Vagina (tissue), 2 donors: ENCODE measurements at regions of chr3 and their contacts with region 1.

Region 1: DNA sequence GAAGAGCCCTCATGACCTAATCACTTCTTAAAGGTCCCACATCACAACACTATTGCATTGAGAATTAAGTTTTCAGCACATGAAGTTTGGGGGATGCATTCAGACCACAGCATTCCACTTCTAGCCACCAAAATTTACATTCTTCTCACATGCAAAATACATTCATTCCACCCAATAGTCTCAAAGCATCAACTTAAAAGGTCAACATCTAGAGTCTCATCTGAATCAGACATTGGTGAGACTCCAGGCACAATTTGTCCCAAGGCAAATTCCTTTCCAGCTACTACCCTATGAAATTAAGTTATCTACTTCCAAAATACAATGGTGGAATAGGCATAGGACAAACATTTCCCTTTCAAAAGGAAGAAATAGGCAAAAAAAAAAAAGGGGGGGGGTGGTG is 64.9 kb downstream of the PLSCR2 start:
- DNase-seq: no peak
- H3K4me3 ChIP-seq: no peak overlapping the region
- H3K27ac ChIP-seq: no peak overlapping the region
- H3K4me1 ChIP-seq: no peaks in the 10 kb centered on the region
- H3K27me3 ChIP-seq: no peaks in the 10 kb centered on the region
- CTCF ChIP-seq: no peak
- POLR2A ChIP-seq: no peak

Region 2: DNA sequence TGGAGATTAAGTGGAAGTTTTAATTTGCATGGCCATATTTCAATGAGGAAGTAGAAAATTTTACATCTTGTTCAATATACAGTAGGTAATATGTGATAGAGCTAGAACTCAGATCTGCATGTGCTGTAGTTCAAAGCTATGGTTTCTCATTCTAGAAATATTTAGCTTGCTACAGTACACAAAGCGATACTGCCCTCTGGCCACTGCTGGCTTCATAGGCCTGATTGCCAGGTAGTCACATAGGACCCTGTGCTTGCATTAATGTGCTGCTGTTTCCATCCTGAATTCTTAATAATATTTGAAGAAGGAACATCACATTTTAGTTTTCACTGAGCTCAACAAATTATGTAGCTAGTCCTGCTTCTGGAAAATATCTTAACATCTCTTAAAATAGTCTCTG is 22.1 kb before region 1 on chr3:
- intact Hi-C with region 1: no loop called
- DNase-seq: no peak
- H3K4me3 ChIP-seq: no peak overlapping the region
- H3K27ac ChIP-seq: no peak overlapping the region
- H3K4me1 ChIP-seq: no peaks in the 10 kb centered on the region
- H3K27me3 ChIP-seq: no peaks in the 10 kb centered on the region
- CTCF ChIP-seq: no peak
- POLR2A ChIP-seq: no peak

Region 3: GRCh38 chr3:146454796-146455195 is 50.4 kb after region 1 on chr3:
- intact Hi-C with region 1: loop called (anchors 10 kb)
- DNase-seq: no peak
- H3K4me3 ChIP-seq: no peak overlapping the region
- H3K27ac ChIP-seq: no peak overlapping the region
- H3K4me1 ChIP-seq: no peaks in the 10 kb centered on the region
- H3K27me3 ChIP-seq: no peaks in the 10 kb centered on the region
- CTCF ChIP-seq: no peak
- POLR2A ChIP-seq: no peak